ENCODE measurements at regions of chr11 and their contacts with region 1.

Region 1: DNA sequence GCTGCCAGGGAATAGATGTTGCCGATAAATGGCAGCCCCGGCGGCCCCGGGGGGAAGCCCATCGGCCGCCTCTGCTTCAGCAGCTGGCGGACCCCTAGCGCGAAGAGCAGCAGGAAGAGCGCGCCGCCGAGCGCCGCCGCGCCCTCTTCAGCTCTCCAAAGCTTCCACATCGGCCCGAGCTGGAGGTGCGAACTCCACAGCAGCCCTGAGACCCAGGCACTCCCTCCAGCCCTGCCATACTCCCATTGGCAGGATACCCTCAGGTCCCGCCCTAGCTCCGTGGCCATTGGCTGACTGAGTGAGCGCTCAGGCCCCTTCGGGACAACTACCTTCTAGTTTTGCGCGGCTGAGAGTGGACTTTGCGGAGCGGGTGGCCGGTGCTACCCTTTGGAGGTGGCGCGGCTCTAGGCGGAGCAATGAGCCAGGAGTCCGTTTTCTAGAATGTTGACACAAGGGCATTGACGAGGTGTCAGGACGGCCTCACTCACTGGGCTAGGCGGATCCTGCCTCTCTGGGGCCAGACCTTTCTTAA is at the start of gene CYP2R1:
- DNase-seq: peak; percentile 85
- ATAC-seq: peak; percentile 84
- H3K4me3 Mint-ChIP-seq: peak within 1 kb of the TSS; percentile 94
- H3K27ac Mint-ChIP-seq: peak within 1 kb of the TSS; percentile 97
- H3K4me1 Mint-ChIP-seq: peaks cover 26% of the 10 kb centered on the region
- H3K27me3 Mint-ChIP-seq: no peaks in the 10 kb centered on the region
- CTCF ChIP-seq: no peak
- total RNA-seq, gene CYP2R1: 20.1 and 22.0 TPM in 2 replicates

Region 2: DNA sequence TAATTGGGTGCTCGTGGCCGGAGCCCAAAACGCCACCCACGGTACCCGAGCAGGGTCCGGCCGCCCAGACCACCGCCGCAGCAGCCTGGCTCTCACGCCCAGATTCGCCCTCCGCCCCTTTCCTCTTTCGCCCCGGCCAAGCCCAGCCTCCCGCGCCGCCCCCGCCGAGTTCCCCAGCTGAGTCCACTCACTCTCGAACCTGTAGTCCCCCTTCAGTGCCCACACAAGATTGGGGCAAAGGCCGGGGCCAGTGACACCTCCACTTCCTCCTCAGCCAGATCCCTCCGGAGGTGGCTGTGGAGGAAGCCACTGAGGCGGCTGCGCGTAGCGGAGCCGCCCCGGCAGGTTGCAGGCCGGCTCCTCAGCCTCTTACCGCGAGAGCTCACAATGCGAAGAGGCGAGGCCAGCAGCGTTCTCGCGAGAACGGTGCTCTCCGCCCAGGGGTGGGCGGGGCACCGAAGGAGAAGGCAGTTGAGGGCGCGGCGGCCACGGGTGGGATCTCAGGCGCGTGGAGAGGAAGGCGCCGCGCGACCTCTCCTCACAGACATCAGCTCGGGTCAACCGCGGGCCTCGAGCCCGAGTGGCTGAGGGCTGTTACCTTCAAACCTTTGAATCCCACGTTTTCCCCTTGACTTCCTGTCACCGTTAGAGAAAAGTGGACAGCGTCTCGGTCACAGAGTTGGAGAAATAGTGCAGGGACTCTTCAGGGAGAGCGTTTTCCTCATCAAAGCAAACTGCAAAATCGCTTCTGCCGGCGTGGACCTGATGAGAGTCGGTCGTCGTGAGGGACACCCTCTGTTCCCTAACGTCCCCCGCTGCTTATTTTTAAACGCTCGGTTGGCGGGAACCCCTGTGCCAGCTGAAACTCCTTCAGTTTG is 1429.0 kb before region 1 on chr11 and contains the start of gene BTBD10:
- CTCF ChIA-PET with region 1: no interaction called
- POLR2A ChIA-PET with region 1: interaction called, 4 read pairs
- intact Hi-C with region 1: loop called (anchors 1 kb)
- DNase-seq: peak; percentile 91
- ATAC-seq: peak; percentile 98
- H3K4me3 Mint-ChIP-seq: peak within 1 kb of the TSS; percentile 98
- H3K27ac Mint-ChIP-seq: peak within 1 kb of the TSS; percentile 95
- H3K4me1 Mint-ChIP-seq: peaks cover 43% of the 10 kb centered on the region
- H3K27me3 Mint-ChIP-seq: no peaks in the 10 kb centered on the region
- CTCF ChIP-seq: no peak
- total RNA-seq, gene BTBD10: 18.8 and 25.1 TPM in 2 replicates

Region 3: DNA sequence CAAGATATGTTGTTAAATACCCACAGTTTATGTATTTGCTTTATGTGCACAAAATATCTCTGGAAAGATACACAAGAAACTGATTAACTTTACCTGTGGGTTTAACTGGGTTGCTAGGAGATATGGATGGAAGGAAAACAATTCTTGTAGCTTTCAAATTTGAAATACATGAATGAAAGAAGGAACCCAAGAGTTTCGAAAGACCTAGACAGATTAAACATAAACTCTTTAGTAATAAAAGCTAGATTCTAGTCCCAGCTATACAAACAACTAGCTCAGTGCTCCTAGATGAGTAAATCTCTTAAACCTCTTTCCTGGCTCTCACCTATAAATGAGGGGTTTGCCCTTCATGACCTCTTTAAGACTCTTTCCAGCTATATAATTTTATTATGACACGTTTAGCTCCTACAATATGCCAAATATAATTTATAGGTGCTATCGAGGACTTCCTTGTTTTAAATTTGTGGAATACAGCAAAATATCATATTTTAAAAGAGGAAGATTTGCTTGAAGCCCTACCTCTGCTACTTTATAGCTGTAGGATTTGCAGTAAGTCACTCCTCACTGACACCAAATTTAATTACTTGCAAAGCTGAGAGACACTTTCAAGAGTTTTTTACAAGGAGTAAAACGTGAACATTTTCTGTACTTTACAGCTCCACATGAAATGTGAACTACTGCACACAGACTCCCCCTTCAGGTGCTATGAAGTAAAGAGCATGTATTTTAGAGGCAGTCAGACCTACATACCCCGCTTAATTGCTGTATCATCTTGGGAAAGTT is 583.8 kb before region 1 on chr11:
- CTCF ChIA-PET with region 1: no interaction called
- POLR2A ChIA-PET with region 1: no interaction called
- intact Hi-C with region 1: loop called (anchors 5 kb)
- DNase-seq: no peak
- ATAC-seq: peak; percentile 51
- H3K4me3 Mint-ChIP-seq: no peak overlapping the region
- H3K27ac Mint-ChIP-seq: no peak overlapping the region
- H3K4me1 Mint-ChIP-seq: peaks cover 43% of the 10 kb centered on the region
- H3K27me3 Mint-ChIP-seq: no peaks in the 10 kb centered on the region
- CTCF ChIP-seq: peak; percentile 58

Region 4: GRCh38 chr11:14537134-14537599 is 354.9 kb before region 1 on chr11:
- CTCF ChIA-PET with region 1: interaction called, 3 read pairs
- POLR2A ChIA-PET with region 1: no interaction called
- intact Hi-C with region 1: loop called (anchors 1 kb)
- DNase-seq: no peak
- ATAC-seq: peak; percentile 88
- H3K4me3 Mint-ChIP-seq: peak overlapping the region; percentile 80
- H3K27ac Mint-ChIP-seq: peak overlapping the region; percentile 81
- H3K4me1 Mint-ChIP-seq: peaks cover 9% of the 10 kb centered on the region
- H3K27me3 Mint-ChIP-seq: no peaks in the 10 kb centered on the region
- CTCF ChIP-seq: peak; percentile 86

Region 5: DNA sequence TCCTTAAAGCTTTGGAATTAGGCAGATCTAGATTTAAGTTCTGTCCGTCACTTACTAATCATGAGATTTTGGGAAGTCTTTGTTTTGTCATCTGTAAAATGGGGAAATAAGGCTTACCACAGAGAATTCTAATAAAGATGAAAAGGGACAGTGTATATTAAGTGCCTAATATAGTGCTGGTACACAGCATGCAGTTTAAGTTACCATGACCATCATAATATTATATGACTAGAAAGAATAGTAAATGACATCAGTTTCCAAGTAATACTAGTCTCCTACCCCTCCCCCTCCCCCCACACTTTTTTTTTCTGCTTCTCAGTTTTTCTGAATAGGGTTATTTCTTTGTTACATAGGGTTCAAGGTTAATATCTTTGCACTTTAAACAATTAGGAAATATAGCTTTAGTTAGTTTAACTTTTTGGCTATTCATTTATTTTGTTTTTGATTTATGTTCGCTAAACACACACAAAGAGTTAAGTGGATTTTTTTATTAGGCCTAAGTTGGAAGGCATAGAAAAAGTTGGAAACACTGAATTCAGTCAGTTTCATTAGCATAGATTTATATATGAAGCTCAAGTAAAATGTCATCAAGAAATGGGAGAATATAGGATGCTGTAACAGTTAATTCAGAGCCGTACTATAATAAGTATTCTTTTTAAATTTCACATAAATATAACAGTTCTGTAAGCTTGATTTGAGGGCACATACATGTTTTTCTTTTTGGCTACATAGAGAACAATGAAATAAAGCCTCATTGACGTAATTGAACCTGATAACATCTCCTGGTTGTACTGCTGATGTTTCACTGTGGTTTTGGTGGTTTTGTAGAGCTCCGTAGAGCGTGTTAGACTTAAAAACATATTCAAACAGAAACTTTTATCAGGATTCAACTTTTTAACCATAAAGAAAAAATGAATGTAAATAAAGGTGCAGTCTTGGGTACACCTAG is 127.2 kb before region 1 on chr11:
- CTCF ChIA-PET with region 1: interaction called, 3 read pairs
- POLR2A ChIA-PET with region 1: interaction called, 48 read pairs
- intact Hi-C with region 1: loop called (anchors 1 kb)
- DNase-seq: no peak
- ATAC-seq: peak; percentile 87
- H3K4me3 Mint-ChIP-seq: peak overlapping the region; percentile 38
- H3K27ac Mint-ChIP-seq: peak overlapping the region; percentile 74
- H3K4me1 Mint-ChIP-seq: peaks cover 34% of the 10 kb centered on the region
- H3K27me3 Mint-ChIP-seq: no peaks in the 10 kb centered on the region
- CTCF ChIP-seq: no peak

Region 6: DNA sequence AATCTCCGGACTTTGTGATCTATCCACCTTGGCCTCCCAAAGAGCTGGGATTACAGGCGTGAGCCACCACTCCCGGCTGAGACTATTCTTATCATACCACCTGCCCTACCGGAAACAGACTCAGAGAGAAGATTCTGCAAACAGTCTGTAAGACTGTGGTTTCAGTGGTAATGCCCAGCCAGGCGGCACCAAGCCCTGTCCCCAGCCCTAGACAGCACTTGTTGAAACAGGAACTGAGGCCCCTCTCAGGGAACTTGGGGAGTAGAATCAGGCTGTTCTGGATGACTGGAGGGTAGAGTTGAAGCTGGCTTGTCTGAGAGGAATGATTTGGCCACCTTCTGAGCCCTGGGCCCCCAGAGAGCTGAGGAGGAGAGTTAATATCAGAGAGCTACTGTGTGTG is 221.3 kb after region 1 on chr11:
- CTCF ChIA-PET with region 1: no interaction called
- POLR2A ChIA-PET with region 1: no interaction called
- intact Hi-C with region 1: loop called (anchors 1 kb)
- DNase-seq: peak; percentile 54
- ATAC-seq: peak; percentile 94
- H3K4me3 Mint-ChIP-seq: peak overlapping the region; percentile 70
- H3K27ac Mint-ChIP-seq: peak overlapping the region; percentile 79
- H3K4me1 Mint-ChIP-seq: peaks cover 77% of the 10 kb centered on the region
- H3K27me3 Mint-ChIP-seq: peaks cover 13% of the 10 kb centered on the region
- CTCF ChIP-seq: no peak